AG04450 (cell line): ENCODE measurements at regions of chr6 and their contacts with region 1.

Region 1: GRCh38 chr6:72411872-72412708 is 209.8 kb upstream of the KCNQ5 start:
- DNase-seq: peak; percentile 69
- H3K4me3 ChIP-seq: no peak overlapping the region
- H3K27ac ChIP-seq: no peak overlapping the region
- H3K27me3 ChIP-seq: no peaks in the 10 kb centered on the region
- CTCF ChIP-seq: peak; percentile 100

Region 2: GRCh38 chr6:72246926-72247325 is 165.2 kb before region 1 on chr6:
- CTCF ChIA-PET with region 1: interaction called, 18 read pairs
- POLR2A ChIA-PET with region 1: no interaction called
- DNase-seq: no peak
- H3K4me3 ChIP-seq: no peak overlapping the region
- H3K27ac ChIP-seq: no peak overlapping the region
- H3K27me3 ChIP-seq: no peaks in the 10 kb centered on the region
- CTCF ChIP-seq: peak; percentile 21; the same call in 1 of the 2 replicates

Region 3: GRCh38 chr6:72401865-72402264 is 10.2 kb before region 1 on chr6:
- CTCF ChIA-PET with region 1: interaction called, 17 read pairs
- POLR2A ChIA-PET with region 1: no interaction called
- DNase-seq: no peak
- H3K4me3 ChIP-seq: no peak overlapping the region
- H3K27ac ChIP-seq: no peak overlapping the region
- H3K27me3 ChIP-seq: no peaks in the 10 kb centered on the region
- CTCF ChIP-seq: no peak

Region 4: DNA sequence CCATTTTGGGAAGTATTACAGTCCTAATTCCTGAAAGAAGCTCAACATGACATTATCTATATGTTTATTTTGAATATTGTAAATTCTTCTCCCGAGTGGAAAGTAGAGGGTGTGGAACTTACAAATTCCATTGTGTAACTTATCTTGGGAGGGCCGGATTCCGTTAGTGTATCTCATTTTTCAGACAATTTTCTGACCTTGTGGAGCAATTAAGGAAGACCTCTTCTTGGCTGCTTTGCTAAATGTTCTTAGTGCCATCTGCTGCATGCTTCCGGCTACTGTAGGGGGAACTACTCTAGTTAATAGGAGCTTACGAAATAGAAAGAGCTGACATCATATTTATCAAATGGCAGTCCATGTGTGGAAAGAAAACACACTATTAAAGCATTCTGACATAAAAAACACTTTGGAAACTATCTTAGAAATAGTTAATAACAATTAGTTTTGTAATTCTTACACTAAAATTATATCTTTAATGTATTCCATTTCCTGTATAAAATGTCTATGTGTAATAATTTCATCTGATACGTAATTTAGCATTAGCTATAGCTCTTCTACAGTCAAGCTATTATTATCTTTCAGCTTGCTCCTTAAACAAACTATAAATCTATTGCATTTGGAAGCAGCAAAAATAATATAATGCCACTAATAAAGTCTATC is 168.3 kb after region 1 on chr6:
- CTCF ChIA-PET with region 1: interaction called, 217 read pairs
- POLR2A ChIA-PET with region 1: no interaction called
- DNase-seq: peak; percentile 49
- H3K4me3 ChIP-seq: no peak overlapping the region
- H3K27ac ChIP-seq: no peak overlapping the region
- H3K27me3 ChIP-seq: no peaks in the 10 kb centered on the region
- CTCF ChIP-seq: peak; percentile 84

Region 5: GRCh38 chr6:73129653-73130443 is 717.8 kb after region 1 on chr6:
- CTCF ChIA-PET with region 1: interaction called, 15 read pairs
- POLR2A ChIA-PET with region 1: no interaction called
- DNase-seq: peak; percentile 37
- H3K4me3 ChIP-seq: no peak overlapping the region
- H3K27ac ChIP-seq: no peak overlapping the region
- H3K27me3 ChIP-seq: no peaks in the 10 kb centered on the region
- CTCF ChIP-seq: peak; percentile 100

Region 6: DNA sequence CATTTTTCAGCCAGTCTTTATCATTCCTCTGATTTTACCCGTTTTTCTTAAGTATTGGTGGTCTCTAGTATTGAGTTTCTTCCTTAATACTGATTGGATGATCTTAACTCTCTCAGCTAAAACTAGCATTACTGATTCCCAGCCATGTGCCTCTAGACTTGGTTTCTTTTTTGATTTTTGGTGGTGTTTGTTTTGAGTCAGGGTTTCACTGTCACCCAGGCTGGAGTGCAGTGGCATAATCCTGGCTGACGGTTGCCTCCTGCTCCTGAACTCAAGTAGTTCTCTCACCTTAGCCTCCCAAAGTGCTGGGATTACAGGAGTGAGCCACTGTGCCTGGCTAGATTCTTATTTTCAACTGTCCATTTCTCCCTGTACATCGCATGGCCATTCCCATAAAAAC is 917.1 kb after region 1 on chr6:
- CTCF ChIA-PET with region 1: interaction called, 13 read pairs
- POLR2A ChIA-PET with region 1: no interaction called
- DNase-seq: no peak
- H3K4me3 ChIP-seq: no peak overlapping the region
- H3K27ac ChIP-seq: no peak overlapping the region
- H3K27me3 ChIP-seq: no peaks in the 10 kb centered on the region
- CTCF ChIP-seq: no peak